ENCODE measurements at regions of chr20 and their contacts with region 1.

Region 1: GRCh38 chr20:34768096-34768495 is 57.4 kb downstream of the NCOA6 start:
- DNase-seq: no peak
- H3K4me3 Mint-ChIP-seq: no peak overlapping the region
- H3K27ac Mint-ChIP-seq: no peak overlapping the region
- H3K4me1 Mint-ChIP-seq: no peaks in the 10 kb centered on the region
- H3K27me3 Mint-ChIP-seq: no peaks in the 10 kb centered on the region

Region 2: GRCh38 chr20:34538671-34539123 is 229.4 kb before region 1 on chr20:
- intact Hi-C with region 1: loop called (anchors 1 kb)
- DNase-seq: peak; percentile 29
- H3K4me3 Mint-ChIP-seq: no peak overlapping the region
- H3K27ac Mint-ChIP-seq: no peak overlapping the region
- H3K4me1 Mint-ChIP-seq: peaks cover 24% of the 10 kb centered on the region
- H3K27me3 Mint-ChIP-seq: no peaks in the 10 kb centered on the region

Region 3: DNA sequence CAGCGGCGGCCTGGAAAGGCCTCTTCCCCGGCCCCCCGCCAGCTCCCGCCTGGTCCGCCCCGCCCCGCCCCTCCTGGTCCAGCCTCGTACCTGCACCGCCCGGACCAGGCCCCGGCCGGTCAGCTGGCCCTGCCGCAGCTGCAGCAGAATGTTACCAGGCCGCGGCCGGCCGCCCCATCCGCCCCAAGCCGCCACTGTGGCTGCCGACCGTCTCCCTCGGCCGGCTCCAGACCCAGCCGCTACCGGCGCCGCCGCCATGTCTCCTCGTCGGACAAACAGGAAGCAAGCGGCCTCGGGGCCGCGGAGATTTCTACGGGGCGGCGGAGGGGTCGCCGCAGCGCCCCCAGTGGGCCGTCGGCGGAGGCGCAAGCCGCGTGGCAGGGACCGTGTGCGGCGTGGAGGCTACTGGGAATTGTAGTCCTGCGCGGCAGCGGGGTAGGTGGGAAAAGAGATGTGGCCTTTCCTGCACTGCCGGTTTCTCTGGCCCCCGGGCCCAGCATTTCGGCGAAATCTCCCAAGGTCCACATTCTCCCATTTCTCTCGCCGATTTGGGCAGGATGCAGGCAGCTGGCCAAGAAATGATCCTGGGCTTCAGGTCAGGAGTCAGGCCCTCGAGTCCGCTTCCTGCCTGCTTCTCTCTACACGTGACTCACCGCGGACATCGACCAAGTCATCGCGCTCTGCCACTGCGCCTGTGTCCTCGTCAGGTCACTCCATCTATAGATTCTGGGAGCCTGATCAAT is 324.6 kb after region 1 on chr20 and contains the start of gene TRPC4AP:
- intact Hi-C with region 1: no loop called
- DNase-seq: peak; percentile 88
- H3K4me3 Mint-ChIP-seq: peak within 1 kb of the TSS; percentile 92
- H3K27ac Mint-ChIP-seq: peak within 1 kb of the TSS; percentile 94
- H3K4me1 Mint-ChIP-seq: peaks cover 48% of the 10 kb centered on the region
- H3K27me3 Mint-ChIP-seq: no peaks in the 10 kb centered on the region
- total RNA-seq, gene TRPC4AP: 53.9 and 54.0 TPM in 2 replicates

Measured in activated T-helper 1 cell treated with anti-CD3 and anti-CD28 coated beads, Interleukin-12 subunit alpha, Interleukin-12 subunit beta, Interleukin-2, Interleukin-4 antibody, amounts not matched to agents 30 ng/mL and 10 ng/mL and 1 ng/mL, durations not matched to agents 14 hours and 24 hours and 36 hours (primary cell).